Activated naive CD8-positive, alpha-beta T cell treated with anti-CD3 and anti-CD28 coated beads, Interleukin-2, amount 10 ng/mL, durations not matched to agents 7 days and 5 days (primary cell): ENCODE measurements at regions of chr19 and their contacts with region 1.

Region 1: GRCh38 chr19:46614114-46614722 is 10.7 kb downstream of the PTGIR start:
- DNase-seq: peak; percentile 87
- ATAC-seq: peak; percentile 28
- H3K4me3 Mint-ChIP-seq: peak overlapping the region; percentile 33
- H3K27ac Mint-ChIP-seq: peak overlapping the region; percentile 83
- H3K4me1 Mint-ChIP-seq: peaks cover 56% of the 10 kb centered on the region
- H3K27me3 Mint-ChIP-seq: no peaks in the 10 kb centered on the region

Region 2: GRCh38 chr19:46600384-46601317 is 13.6 kb before region 1 on chr19:
- POLR2A ChIA-PET with region 1: interaction called, 142 read pairs
- DNase-seq: peak; percentile 99
- ATAC-seq: peak; percentile 87
- H3K4me3 Mint-ChIP-seq: peak overlapping the region; percentile 97
- H3K27ac Mint-ChIP-seq: peak overlapping the region; percentile 100
- H3K4me1 Mint-ChIP-seq: peaks cover 29% of the 10 kb centered on the region
- H3K27me3 Mint-ChIP-seq: peaks cover 2% of the 10 kb centered on the region

Region 3: GRCh38 chr19:46624958-46625661 is 10.9 kb after region 1 on chr19 and contains the start of gene PTGIR:
- POLR2A ChIA-PET with region 1: interaction called, 36 read pairs
- DNase-seq: no peak
- ATAC-seq: peak; percentile 37
- H3K4me3 Mint-ChIP-seq: peak within 1 kb of the TSS; percentile 92
- H3K27ac Mint-ChIP-seq: peak within 1 kb of the TSS; percentile 95
- H3K4me1 Mint-ChIP-seq: peaks cover 38% of the 10 kb centered on the region
- H3K27me3 Mint-ChIP-seq: no peaks in the 10 kb centered on the region
- total RNA-seq, gene PTGIR: 8.0 to 8.5 TPM

Region 4: GRCh38 chr19:46631481-46631880 is 17.3 kb after region 1 on chr19:
- POLR2A ChIA-PET with region 1: interaction called, 36 read pairs
- DNase-seq: no peak
- ATAC-seq: no peak
- H3K4me3 Mint-ChIP-seq: no peak overlapping the region
- H3K27ac Mint-ChIP-seq: no peak overlapping the region
- H3K4me1 Mint-ChIP-seq: peaks cover 20% of the 10 kb centered on the region
- H3K27me3 Mint-ChIP-seq: no peaks in the 10 kb centered on the region

Region 5: DNA sequence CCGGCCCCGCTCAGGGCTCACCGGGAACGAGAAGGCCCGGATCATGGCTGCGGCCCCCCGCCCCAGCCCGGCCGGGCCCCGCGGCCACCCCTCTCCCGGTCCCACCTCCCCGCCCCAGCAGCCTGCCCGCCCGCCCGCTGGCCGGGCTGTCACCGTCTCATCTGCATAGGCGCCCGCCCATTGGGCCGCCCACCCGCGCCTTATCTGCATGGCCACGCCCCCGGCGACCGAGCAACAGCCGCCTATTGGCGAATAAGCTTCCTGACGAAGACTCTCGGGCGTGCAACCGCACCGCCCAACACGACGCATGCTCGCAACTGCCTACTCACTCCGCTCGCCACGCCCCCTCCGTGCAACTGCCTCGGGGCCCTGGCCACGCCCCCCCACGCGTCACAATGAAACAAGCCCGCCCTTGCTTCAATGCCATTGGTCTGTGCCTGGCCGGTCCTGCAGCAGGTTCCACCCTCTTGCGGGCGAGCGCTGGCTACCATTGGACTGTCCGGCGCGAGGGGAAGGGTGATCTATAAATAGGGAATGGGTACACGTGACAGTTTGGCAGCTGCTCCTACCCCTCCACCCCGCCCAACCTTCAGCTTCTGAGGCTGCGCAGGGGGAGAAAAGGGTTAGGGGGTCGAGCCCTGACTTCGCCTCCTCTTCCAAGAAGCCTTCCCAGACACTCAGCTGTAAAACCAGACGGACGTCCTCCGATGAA is 47.0 kb after region 1 on chr19 and contains the start of gene DACT3:
- POLR2A ChIA-PET with region 1: interaction called, 37 read pairs
- DNase-seq: peak; percentile 100
- ATAC-seq: peak; percentile 92
- H3K4me3 Mint-ChIP-seq: peak within 1 kb of the TSS; percentile 83
- H3K27ac Mint-ChIP-seq: peak within 1 kb of the TSS; percentile 90
- H3K4me1 Mint-ChIP-seq: peaks cover 12% of the 10 kb centered on the region
- H3K27me3 Mint-ChIP-seq: peaks cover 32% of the 10 kb centered on the region
- total RNA-seq, gene DACT3: 0.42 to 0.48 TPM

Region 6: GRCh38 chr19:46717034-46717723 is 103.0 kb after region 1 on chr19 and contains the start of gene PRKD2:
- POLR2A ChIA-PET with region 1: interaction called, 14 read pairs
- DNase-seq: peak; percentile 94
- ATAC-seq: peak; percentile 38
- H3K4me3 Mint-ChIP-seq: peak within 1 kb of the TSS; percentile 97
- H3K27ac Mint-ChIP-seq: peak within 1 kb of the TSS; percentile 97
- H3K4me1 Mint-ChIP-seq: peaks cover 35% of the 10 kb centered on the region
- H3K27me3 Mint-ChIP-seq: no peaks in the 10 kb centered on the region
- total RNA-seq, gene PRKD2: 166 to 173 TPM